ENCODE measurements at regions of chr20 and their contacts with region 1.

Region 1: DNA sequence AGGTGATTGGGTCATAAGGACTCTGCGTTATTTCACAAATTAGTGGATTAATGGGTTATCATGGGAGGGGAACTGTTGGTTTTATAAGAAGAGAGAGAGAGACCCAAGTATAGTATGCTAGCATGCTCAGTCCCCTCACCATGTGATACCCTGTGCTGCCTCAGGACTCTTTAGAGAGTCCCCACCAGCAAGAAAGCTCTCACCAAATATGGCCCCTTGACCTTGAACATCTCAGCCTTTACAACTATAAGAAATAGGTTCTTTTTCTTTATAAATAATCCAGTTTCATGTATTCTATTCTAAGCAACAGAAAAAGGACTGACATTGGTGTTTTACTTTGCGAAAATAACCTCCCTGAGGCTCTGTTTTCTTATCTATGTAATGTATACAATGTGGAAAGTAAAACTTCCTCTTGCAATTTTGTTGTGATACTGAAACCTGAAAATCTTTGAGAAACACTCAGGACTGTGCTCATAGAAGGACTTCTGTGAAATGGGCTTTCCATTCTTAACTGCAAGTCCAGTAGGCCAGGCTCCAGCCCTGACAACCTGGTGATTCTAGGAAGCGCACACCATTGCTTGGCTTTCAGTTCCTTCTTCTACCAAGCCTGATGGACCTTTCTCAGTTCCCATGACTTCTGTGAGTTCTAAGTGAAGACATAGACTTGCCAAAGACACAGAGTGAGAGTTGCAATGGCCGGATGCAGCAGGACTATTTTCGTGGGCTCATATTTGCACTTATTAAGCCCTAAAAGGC is 21.9 kb downstream of the SIRPD start:
- DNase-seq: no peak

Region 2: GRCh38 chr20:1154691-1155090 is 380.9 kb before region 1 on chr20:
- in situ Hi-C with region 1: no loop called
- DNase-seq: no peak

Region 3: GRCh38 chr20:1734269-1734858 is 198.8 kb after region 1 on chr20:
- in situ Hi-C with region 1: loop called (anchors 25 kb)
- DNase-seq: peak; percentile 34

Measured in SK-MEL-5 (cell line).